ENCODE measurements at regions of chr21 and their contacts with region 1.

Region 1: GRCh38 chr21:33915368-33916199 is at the start of gene ATP5PO:
- DNase-seq: peak; percentile 98 to 99
- ATAC-seq: peak; percentile 99 to 100 (median 100)
- H3K4me3 ChIP-seq: peak within 1 kb of the TSS; percentile 99
- H3K27ac ChIP-seq: peak within 1 kb of the TSS; percentile 89
- H3K4me1 ChIP-seq: peaks cover 20% of the 10 kb centered on the region
- H3K27me3 ChIP-seq: no peaks in the 10 kb centered on the region
- CTCF ChIP-seq: no peak
- total RNA-seq, gene ATP5PO: 294 to 473 (median 332) TPM

Region 2: GRCh38 chr21:33848249-33848953 is 67.2 kb before region 1 on chr21:
- intact Hi-C with region 1: no loop called
- DNase-seq: no peak
- ATAC-seq: no peak
- H3K4me3 ChIP-seq: no peak overlapping the region
- H3K27ac ChIP-seq: peak overlapping the region; percentile 30
- H3K4me1 ChIP-seq: peaks cover 7% of the 10 kb centered on the region
- H3K27me3 ChIP-seq: no peaks in the 10 kb centered on the region
- CTCF ChIP-seq: no peak

Region 3: GRCh38 chr21:34091607-34092006 is 176.0 kb after region 1 on chr21:
- intact Hi-C with region 1: no loop called
- DNase-seq: no peak
- ATAC-seq: no peak
- H3K4me3 ChIP-seq: no peak overlapping the region
- H3K27ac ChIP-seq: no peak overlapping the region
- H3K4me1 ChIP-seq: peaks cover 40% of the 10 kb centered on the region
- H3K27me3 ChIP-seq: no peaks in the 10 kb centered on the region
- CTCF ChIP-seq: peak; percentile 19

Region 4: DNA sequence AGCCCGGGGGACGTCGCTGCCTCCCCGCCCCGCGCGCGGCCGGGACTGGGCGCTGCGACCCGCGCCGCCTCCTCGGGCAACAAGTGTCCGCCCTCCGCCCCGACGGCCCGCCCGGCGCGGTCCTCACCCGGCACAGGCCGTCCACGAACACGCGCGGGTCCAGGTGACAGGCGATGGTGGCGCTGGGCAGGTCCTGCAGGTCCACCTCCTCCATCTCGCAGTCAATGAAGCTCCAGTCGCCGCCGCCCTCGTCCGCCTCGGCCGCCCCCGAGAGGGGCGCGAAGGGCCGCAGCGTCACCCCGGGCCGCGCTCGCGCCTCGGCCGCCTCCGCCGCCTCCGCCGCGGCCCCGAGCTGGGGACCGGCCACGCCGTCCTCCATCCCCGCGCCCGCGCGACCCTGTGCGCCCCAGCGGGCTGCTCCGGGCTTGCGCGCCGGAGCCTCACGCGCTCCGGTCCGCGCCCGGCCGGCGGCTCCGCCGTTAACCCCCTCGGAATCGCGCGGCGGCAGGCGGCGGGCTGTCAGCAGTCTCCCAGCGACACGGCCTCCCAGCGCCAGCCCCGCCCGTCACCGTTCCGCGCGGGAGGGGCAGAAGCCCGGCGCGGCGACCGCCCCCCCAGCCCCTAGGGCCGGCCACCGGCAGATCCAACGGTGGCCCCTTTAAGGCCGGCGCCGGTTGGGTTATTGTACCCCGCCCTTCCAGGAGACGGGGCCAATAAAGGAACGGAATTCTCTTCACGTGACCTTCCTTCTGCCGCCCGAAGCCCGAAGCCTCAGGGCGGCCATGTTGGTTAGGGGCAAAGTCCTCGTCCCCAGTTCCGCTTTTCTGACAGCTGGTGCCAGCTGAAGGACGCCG is 699.3 kb after region 1 on chr21 and contains the start of gene RCAN1:
- intact Hi-C with region 1: loop called in 1 of 2 experiments (anchors 10 kb)
- DNase-seq: peak; percentile 91 to 95
- ATAC-seq: peak; percentile 98 to 99 (median 98)
- H3K4me3 ChIP-seq: peak within 1 kb of the TSS; percentile 77
- H3K27ac ChIP-seq: peak within 1 kb of the TSS; percentile 83
- H3K4me1 ChIP-seq: peaks cover 17% of the 10 kb centered on the region
- H3K27me3 ChIP-seq: no peaks in the 10 kb centered on the region
- CTCF ChIP-seq: no peak
- total RNA-seq, gene RCAN1: 24.9 to 38.4 (median 26.1) TPM

Region 5: DNA sequence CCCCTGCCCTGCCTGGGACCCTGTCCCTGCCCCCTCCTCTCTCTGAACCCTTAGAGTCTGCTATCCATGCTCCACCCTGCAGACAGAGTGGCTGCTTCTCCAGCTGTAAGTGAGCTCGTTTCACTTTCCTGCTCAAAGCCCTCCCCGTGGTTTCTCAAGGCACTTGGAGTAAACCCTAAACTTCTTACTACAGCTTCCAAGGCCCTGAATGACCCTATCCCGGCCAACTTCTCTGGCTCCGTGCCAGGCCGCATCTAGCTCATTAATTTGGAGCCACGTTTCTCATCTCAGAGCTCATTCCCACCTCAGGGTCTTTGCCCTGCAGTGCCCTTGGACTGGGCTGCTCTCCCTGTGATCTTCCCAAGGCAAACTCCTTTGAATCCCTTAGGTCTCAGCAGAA is 1368.6 kb after region 1 on chr21:
- intact Hi-C with region 1: no loop called
- DNase-seq: peak; percentile 52 to 60
- ATAC-seq: peak; percentile 39 to 61 (median 52)
- H3K4me3 ChIP-seq: no peak overlapping the region
- H3K27ac ChIP-seq: no peak overlapping the region
- H3K4me1 ChIP-seq: peaks cover 3% of the 10 kb centered on the region
- H3K27me3 ChIP-seq: no peaks in the 10 kb centered on the region
- CTCF ChIP-seq: no peak